Gastrocnemius medialis (tissue), 4 donors: ENCODE measurements at regions of chr11 and their contacts with region 1.

Region 1: DNA sequence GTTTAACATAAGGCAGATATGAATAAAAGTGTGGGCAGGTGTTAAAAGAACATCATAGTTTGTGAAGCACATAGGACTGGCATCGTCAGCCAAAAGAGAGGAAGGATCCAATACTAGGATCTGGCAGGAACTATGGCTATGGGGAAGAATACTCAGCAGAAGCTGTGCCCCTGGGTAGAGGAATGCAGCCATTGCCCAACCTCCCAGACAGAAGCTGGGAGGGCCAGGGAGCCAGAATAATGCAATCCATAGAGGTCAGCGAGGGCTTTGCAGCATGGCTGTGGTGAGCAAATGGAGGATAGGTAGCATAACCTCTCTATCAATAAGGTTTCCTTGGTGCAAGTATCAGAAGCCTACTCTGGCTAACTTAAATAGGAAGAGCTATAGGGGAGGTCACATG is 11.7 kb upstream of the CSTF3 start:
- DNase-seq: peak in 1 of 2 donors; percentile 52
- ATAC-seq: peak; percentile 65 to 97
- H3K4me3 ChIP-seq: no peak overlapping the region
- H3K27ac ChIP-seq: peak overlapping the region in 2 of 4 donors; percentile 6 to 48
- H3K4me1 ChIP-seq: peaks cover 0 to 9% of the 10 kb centered on the region in 2 donors
- H3K27me3 ChIP-seq: no peaks in the 10 kb centered on the region
- CTCF ChIP-seq: no peak
- POLR2A ChIP-seq: no peak

Region 2: GRCh38 chr11:33329705-33330329 is 156.8 kb after region 1 on chr11:
- in situ Hi-C with region 1: loop called in 3 of 4 experiments (anchors 5 kb)
- intact Hi-C with region 1: no loop called
- DNase-seq: peak; percentile 27 to 43
- ATAC-seq: peak; percentile 74 to 90
- H3K4me3 ChIP-seq: no peak overlapping the region
- H3K27ac ChIP-seq: peak overlapping the region in 3 of 4 donors; percentile 4 to 47 (median 11)
- H3K4me1 ChIP-seq: peaks cover 84 to 87% of the 10 kb centered on the region in 2 donors
- H3K27me3 ChIP-seq: no peaks in the 10 kb centered on the region
- CTCF ChIP-seq: peak; percentile 57 to 72 (median 64)
- POLR2A ChIP-seq: no peak